Activated CD4-positive, alpha-beta T cell treated with anti-CD3 and anti-CD28 coated beads, Interleukin-2, amount 10 ng/mL, durations not matched to agents 24 days and 14 days (primary cell): ENCODE measurements at regions of chr2 and their contacts with region 1.

Region 1: DNA sequence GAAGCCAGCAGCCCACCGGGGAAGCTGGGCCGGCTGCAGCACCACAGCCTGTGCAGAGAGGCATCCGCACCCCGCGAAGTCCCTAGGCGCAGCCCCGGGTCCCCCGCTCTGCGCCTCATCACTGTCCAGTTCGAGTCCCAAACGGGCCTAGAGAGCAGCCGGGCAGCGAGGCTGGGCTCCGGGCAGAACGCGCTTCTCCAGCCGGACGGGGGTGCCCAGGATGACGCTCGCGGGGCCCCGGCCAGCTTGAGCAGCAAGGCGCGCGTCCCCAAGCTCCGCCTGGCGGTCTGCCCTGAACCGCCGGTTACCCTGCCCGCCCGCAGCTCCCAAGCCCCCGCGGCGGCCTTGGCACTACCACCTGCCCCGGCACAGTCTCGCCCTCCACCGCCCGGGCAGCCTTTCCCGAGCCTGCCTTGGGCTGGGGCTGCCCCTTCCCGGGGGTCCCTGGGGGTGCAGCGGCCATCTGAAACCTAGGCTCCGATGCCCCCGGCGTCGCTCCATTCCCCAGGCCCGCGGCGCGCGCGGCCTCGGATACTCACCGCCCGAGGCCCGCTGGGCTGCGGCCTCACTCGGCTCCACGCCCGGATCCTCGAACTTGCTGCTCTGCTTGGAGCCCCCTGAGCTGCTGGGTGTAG is 591 bp downstream of the SLC16A14 start:
- DNase-seq: peak; percentile 82
- H3K4me3 Mint-ChIP-seq: peak overlapping the region; percentile 80
- H3K27ac Mint-ChIP-seq: peak overlapping the region; percentile 90
- H3K4me1 Mint-ChIP-seq: peaks cover 18% of the 10 kb centered on the region
- H3K27me3 Mint-ChIP-seq: peaks cover 20% of the 10 kb centered on the region

Region 2: GRCh38 chr2:229571243-229571642 is 496.9 kb before region 1 on chr2:
- intact Hi-C with region 1: no loop called
- DNase-seq: no peak
- H3K4me3 Mint-ChIP-seq: no peak overlapping the region
- H3K27ac Mint-ChIP-seq: no peak overlapping the region
- H3K4me1 Mint-ChIP-seq: no peaks in the 10 kb centered on the region
- H3K27me3 Mint-ChIP-seq: no peaks in the 10 kb centered on the region

Region 3: GRCh38 chr2:229825476-229825875 is 242.7 kb before region 1 on chr2:
- intact Hi-C with region 1: loop called (anchors 10 kb)
- DNase-seq: no peak
- H3K4me3 Mint-ChIP-seq: no peak overlapping the region
- H3K27ac Mint-ChIP-seq: no peak overlapping the region
- H3K4me1 Mint-ChIP-seq: peaks cover 24% of the 10 kb centered on the region
- H3K27me3 Mint-ChIP-seq: no peaks in the 10 kb centered on the region

Region 4: DNA sequence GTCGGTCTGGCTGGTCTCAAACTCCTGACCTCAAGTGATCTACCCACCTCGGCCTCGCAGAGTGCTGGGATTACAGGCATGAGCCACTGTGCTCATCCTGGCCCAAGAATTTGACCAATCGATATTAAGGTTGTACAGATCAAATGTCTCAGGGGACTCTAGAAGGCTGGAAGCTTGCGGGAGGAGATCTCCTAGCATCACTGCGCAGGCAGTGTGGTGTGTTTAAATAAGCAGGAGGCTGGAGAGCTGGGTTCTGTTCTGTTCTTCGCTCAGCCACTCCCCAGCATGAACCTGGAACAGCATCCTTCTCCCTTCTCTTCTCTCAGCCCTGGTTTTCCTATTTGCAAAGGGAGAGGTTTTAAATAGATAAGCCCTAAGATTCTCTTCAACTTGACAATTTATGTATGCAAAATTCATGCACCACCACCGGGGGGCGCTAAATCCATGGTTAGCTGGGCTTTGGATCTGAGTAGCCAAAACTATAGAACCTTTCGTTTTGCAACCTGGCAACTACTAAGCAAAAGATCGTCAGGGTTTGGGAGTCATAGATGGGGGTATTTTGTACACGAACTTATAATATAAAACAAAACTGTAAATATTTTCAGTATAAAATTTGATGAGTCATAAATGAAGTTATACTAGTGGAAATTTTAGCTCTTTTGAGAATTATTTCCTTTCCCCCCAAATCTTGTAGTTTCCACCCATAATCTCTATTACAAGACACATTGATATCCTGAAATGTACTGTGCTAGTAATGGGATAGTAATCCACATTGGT is 60.0 kb before region 1 on chr2:
- intact Hi-C with region 1: loop called (anchors 1 kb)
- DNase-seq: peak; percentile 94
- H3K4me3 Mint-ChIP-seq: no peak overlapping the region
- H3K27ac Mint-ChIP-seq: no peak overlapping the region
- H3K4me1 Mint-ChIP-seq: peaks cover 2% of the 10 kb centered on the region
- H3K27me3 Mint-ChIP-seq: no peaks in the 10 kb centered on the region

Region 5: GRCh38 chr2:230053753-230054478 is 14.2 kb before region 1 on chr2:
- intact Hi-C with region 1: loop called (anchors 2 kb)
- DNase-seq: no peak
- H3K4me3 Mint-ChIP-seq: no peak overlapping the region
- H3K27ac Mint-ChIP-seq: no peak overlapping the region
- H3K4me1 Mint-ChIP-seq: peaks cover 4% of the 10 kb centered on the region
- H3K27me3 Mint-ChIP-seq: no peaks in the 10 kb centered on the region

Region 6: DNA sequence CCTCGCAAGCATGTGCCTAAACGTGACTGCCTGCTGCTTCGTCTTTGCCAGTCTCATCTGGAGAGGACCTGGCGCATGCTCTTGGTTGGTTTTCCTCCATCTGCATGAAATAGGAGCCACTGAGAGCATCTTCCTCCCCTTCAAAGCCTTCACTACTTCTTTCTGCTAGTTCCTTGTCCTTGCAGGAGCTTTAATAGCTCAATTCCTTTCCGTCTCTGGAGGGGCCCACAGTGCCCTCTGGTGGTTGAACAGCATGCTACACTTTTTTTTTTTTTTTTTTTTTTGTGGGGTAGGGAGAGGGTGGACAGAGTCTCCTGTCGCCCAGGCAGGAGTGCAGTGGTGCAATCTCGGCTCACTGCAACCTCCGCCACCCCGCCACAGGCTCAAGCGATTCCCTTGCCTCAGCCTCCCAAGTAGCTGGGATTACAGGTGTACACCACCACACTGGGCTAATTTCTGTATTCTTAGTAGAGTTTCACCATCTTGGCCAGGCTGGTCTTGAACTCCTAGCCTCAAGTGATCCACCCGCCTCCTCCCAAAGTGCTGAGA is 92.1 kb after region 1 on chr2:
- intact Hi-C with region 1: loop called (anchors 2 kb)
- DNase-seq: peak; percentile 87
- H3K4me3 Mint-ChIP-seq: no peak overlapping the region
- H3K27ac Mint-ChIP-seq: no peak overlapping the region
- H3K4me1 Mint-ChIP-seq: peaks cover 11% of the 10 kb centered on the region
- H3K27me3 Mint-ChIP-seq: peaks cover 2% of the 10 kb centered on the region